ENCODE measurements at regions of chr2 and their contacts with region 1.

Region 1: GRCh38 chr2:64330281-64331113 is 123.5 kb upstream of the LGALSL start:
- DNase-seq: peak; percentile 58
- H3K4me3 ChIP-seq: peak overlapping the region; percentile 29 to 61
- H3K27ac ChIP-seq: peak overlapping the region in 1 of 2 experiments; percentile 32; a peak in 1 of 4 replicates
- H3K4me1 ChIP-seq: peaks cover 0 to 2% of the 10 kb centered on the region in 2 experiments; a peak in 1 of 4 replicates
- H3K27me3 ChIP-seq: no peaks in the 10 kb centered on the region
- CTCF ChIP-seq: peak; percentile 97
- EP300 ChIP-seq: no peak
- RAD21 ChIP-seq: peak; percentile 95

Region 2: DNA sequence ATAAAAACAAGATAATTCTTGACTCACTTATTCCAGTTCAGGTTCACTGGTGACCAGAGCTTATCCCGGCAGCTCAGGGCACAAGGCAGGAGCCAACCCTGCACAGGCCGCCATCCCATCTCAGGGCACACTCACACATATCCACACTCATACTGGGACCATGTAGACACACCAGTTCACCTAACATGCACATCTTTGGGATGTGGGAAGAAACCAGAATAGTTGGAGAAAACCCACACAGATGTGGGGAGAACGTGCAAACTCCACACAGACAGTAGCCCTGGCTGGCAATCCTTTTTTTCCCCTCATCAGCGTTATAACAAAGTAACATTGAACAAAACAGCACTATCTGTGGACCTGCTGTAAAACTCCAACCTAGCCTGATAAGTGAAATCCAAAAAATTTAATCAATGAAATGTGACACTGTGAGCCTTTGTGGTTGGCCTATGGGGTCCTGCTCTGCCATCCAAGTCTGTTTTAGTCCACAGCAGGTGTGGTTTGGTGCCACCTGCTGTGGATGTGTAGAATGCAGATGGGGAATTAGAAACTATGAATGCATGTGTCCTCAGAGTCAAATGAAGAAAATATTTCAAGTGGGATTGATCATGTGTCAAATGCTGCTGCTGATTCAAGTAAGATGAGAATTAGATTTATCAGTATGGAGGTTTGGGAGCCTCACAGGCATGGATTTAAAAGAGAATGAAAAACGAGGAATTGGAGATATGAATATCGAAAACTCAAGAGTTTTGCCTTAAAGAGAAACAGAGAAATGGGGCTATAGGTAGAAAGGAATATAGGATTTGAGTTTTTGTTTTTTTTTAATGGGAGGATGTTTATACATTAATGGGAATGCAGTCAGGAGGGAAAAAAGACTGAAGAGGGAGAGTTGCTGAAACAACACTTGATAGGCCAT is 441.8 kb before region 1 on chr2:
- CTCF ChIA-PET with region 1: no interaction called
- POLR2A ChIA-PET with region 1: no interaction called
- DNase-seq: peak; percentile 61
- H3K4me3 ChIP-seq: peak overlapping the region in 1 of 2 experiments; percentile 10; a peak in 1 of 4 replicates
- H3K27ac ChIP-seq: peak overlapping the region in 1 of 2 experiments; percentile 40; a peak in 1 of 4 replicates
- H3K4me1 ChIP-seq: no peaks in the 10 kb centered on the region
- H3K27me3 ChIP-seq: no peaks in the 10 kb centered on the region
- CTCF ChIP-seq: peak; percentile 83
- EP300 ChIP-seq: no peak
- RAD21 ChIP-seq: peak; percentile 84

Region 3: GRCh38 chr2:64311948-64312621 is 18.4 kb before region 1 on chr2:
- CTCF ChIA-PET with region 1: interaction called, 50 read pairs
- POLR2A ChIA-PET with region 1: no interaction called
- DNase-seq: peak; percentile 42
- H3K4me3 ChIP-seq: no peak overlapping the region
- H3K27ac ChIP-seq: no peak overlapping the region
- H3K4me1 ChIP-seq: peaks cover 3 to 9% of the 10 kb centered on the region in 2 experiments; a peak in 2 of 4 replicates
- H3K27me3 ChIP-seq: peaks cover 7% of the 10 kb centered on the region; the same call in 1 of the 2 replicates
- CTCF ChIP-seq: peak; percentile 49
- EP300 ChIP-seq: no peak
- RAD21 ChIP-seq: peak; percentile 67

Region 4: DNA sequence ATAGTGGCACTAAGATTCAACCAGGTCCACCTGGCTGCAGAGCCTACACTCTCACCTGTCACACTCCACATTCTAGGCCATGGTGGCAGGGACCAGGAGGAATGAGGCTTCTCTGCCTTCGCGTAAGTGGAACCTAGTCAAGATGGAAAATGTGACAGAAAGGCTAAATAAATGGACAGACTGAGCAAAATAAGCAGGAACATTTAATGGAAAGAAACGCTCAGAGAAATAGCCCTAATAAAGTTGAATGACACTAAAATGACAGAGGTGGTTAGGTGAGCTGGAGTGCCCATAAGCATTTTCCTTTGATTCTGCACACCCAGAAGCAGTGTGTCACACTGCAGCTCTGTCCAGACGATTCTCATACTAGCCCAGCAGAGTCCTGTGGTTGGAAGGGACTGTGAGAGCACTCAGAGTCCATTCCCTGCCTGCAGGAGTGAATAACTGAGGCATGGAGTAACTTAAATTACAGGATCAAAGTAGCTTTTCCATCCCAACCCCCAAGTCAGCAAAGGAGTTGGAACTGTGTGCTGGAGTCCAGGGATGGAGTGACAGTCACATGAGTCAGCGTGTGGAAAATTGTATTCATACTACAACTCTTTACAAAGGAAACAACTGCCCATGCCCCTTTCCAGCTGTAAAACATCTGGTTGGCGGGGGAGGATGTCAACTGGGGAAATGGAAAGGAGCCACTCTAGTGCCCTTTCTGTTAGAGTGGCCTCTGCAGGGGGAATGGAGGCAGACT is 18.1 kb after region 1 on chr2:
- CTCF ChIA-PET with region 1: interaction called, 14 read pairs
- POLR2A ChIA-PET with region 1: no interaction called
- DNase-seq: no peak
- H3K4me3 ChIP-seq: no peak overlapping the region
- H3K27ac ChIP-seq: no peak overlapping the region
- H3K4me1 ChIP-seq: peaks cover 0 to 2% of the 10 kb centered on the region in 2 experiments; a peak in 1 of 4 replicates
- H3K27me3 ChIP-seq: peaks cover 7% of the 10 kb centered on the region; the same call in 1 of the 2 replicates
- CTCF ChIP-seq: no peak
- EP300 ChIP-seq: no peak
- RAD21 ChIP-seq: no peak

Region 5: GRCh38 chr2:64523666-64524603 is 193.4 kb after region 1 on chr2 and contains the start of gene AFTPH:
- CTCF ChIA-PET with region 1: interaction called, 20 read pairs
- POLR2A ChIA-PET with region 1: no interaction called
- DNase-seq: peak; percentile 99
- H3K4me3 ChIP-seq: peak within 1 kb of the TSS; percentile 88 to 94
- H3K27ac ChIP-seq: peak within 1 kb of the TSS; percentile 71 to 92
- H3K4me1 ChIP-seq: peaks cover 0 to 6% of the 10 kb centered on the region in 2 experiments; a peak in 2 of 4 replicates
- H3K27me3 ChIP-seq: peaks cover 9% of the 10 kb centered on the region; the same call in 1 of the 2 replicates
- CTCF ChIP-seq: no peak
- EP300 ChIP-seq: 0 out of 4 replicates have a peak, but pooled peaks of 1 of the 2 experiments have one; percentile 7
- RAD21 ChIP-seq: no peak
- polyA plus RNA-seq, gene AFTPH: 7.4 and 9.8 TPM in 2 replicates

Region 6: DNA sequence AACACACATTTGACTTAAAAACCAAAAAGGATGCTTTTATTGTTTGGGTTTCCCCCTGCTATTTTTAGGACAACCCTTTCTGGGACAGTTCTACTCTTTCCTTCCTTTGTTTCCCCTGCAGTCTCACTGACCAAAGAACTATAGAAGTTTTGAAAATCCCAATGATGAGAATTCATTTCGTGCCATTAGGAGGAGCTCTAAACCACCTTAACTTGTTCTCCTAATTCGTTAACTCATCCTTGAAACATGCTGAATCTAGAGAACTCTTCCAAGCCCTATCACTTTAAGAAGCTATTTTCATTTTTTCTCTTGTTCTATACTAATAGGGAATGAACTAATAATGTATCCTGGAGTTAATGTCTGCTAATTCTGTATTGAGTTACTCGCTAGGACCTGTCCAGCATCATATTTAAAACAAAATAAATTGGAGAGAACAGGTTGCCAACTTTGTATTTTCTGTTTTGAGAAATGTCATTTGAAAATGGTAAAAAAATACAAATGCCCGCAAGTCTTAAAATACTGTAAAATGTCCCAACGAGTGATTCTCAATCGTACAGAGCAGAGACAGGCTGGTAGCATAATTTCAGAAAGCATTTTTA is 256.5 kb after region 1 on chr2:
- CTCF ChIA-PET with region 1: interaction called, 13 read pairs
- POLR2A ChIA-PET with region 1: no interaction called
- DNase-seq: no peak
- H3K4me3 ChIP-seq: no peak overlapping the region
- H3K27ac ChIP-seq: no peak overlapping the region
- H3K4me1 ChIP-seq: peaks cover 2 to 4% of the 10 kb centered on the region in 2 experiments; a peak in 2 of 4 replicates
- H3K27me3 ChIP-seq: no peaks in the 10 kb centered on the region
- CTCF ChIP-seq: peak; percentile 76
- EP300 ChIP-seq: no peak
- RAD21 ChIP-seq: peak; percentile 86

Region 7: GRCh38 chr2:64653349-64654062 is 323.0 kb after region 1 on chr2 and contains the start of gene SERTAD2:
- CTCF ChIA-PET with region 1: interaction called, 19 read pairs
- POLR2A ChIA-PET with region 1: interaction called, 5 read pairs
- DNase-seq: peak; percentile 98
- H3K4me3 ChIP-seq: peak within 1 kb of the TSS; percentile 85
- H3K27ac ChIP-seq: peak within 1 kb of the TSS; percentile 92 to 94
- H3K4me1 ChIP-seq: peaks cover 21 to 44% of the 10 kb centered on the region in 2 experiments
- H3K27me3 ChIP-seq: no peaks in the 10 kb centered on the region
- CTCF ChIP-seq: peak; percentile 28
- EP300 ChIP-seq: no peak
- RAD21 ChIP-seq: no peak
- polyA plus RNA-seq, gene SERTAD2: 8.8 and 9.1 TPM in 2 replicates

Region 8: DNA sequence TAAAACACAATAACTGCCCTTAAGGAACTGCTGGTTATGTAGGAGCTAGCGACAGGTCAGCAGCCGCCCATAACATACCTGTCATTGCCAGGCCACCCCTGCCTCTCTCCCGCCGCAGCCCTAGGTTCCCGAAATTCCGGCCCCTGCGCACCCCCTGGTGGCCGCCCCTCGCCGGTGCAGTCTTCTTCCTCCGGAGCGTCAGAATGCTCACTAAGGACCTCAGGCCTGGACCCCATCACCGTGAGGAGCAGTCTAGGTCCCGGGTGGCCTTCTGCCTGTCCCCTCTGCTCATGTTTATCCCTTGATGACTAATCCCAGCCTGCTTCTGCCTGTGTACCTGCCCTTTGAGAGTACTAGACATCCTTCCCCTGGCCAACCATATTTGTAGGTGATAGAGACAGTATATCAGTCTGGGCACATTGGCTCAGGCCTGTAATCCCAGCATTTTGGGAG is 543.0 kb after region 1 on chr2:
- CTCF ChIA-PET with region 1: interaction called, 26 read pairs
- POLR2A ChIA-PET with region 1: no interaction called
- DNase-seq: peak; percentile 87
- H3K4me3 ChIP-seq: peak overlapping the region in 1 of 2 experiments; percentile 40; a peak in 1 of 4 replicates
- H3K27ac ChIP-seq: no peak overlapping the region
- H3K4me1 ChIP-seq: peaks cover 2 to 6% of the 10 kb centered on the region in 2 experiments; a peak in 2 of 4 replicates
- H3K27me3 ChIP-seq: no peaks in the 10 kb centered on the region
- CTCF ChIP-seq: peak; percentile 95
- EP300 ChIP-seq: no peak
- RAD21 ChIP-seq: peak; percentile 85

Measured in SK-N-SH (cell line).